GM13976 (cell line): ENCODE measurements at regions of chr18 and their contacts with region 1.

Region 1: GRCh38 chr18:61635901-61636528 is 256.8 kb downstream of the RNF152 start:
- DNase-seq: peak; percentile 45
- CTCF ChIP-seq: peak; percentile 52

Region 2: GRCh38 chr18:61893971-61894750 is 258.1 kb after region 1 on chr18:
- in situ Hi-C with region 1: loop called (anchors 25 kb)
- DNase-seq: peak; percentile 85
- CTCF ChIP-seq: peak; percentile 48